ENCODE measurements at regions of chr14 and their contacts with region 1.

Region 1: GRCh38 chr14:57486767-57487379 is 6.8 kb downstream of the CCDC198 start:
- DNase-seq: no peak
- CTCF ChIP-seq: peak; percentile 48

Region 2: GRCh38 chr14:57287745-57288144 is 199.1 kb before region 1 on chr14:
- in situ Hi-C with region 1: no loop called
- DNase-seq: no peak
- CTCF ChIP-seq: no peak

Region 3: GRCh38 chr14:57403521-57403864 is 83.4 kb before region 1 on chr14:
- in situ Hi-C with region 1: no loop called
- DNase-seq: no peak
- CTCF ChIP-seq: no peak

Region 4: GRCh38 chr14:57871459-57872080 is 384.7 kb after region 1 on chr14:
- in situ Hi-C with region 1: loop called (anchors 25 kb)
- DNase-seq: peak; percentile 18
- CTCF ChIP-seq: no peak

Measured in GM13976 (cell line).